ENCODE measurements at regions of chr21 and their contacts with region 1.

Region 1: GRCh38 chr21:46228345-46229051 is at the start of gene LSS:
- DNase-seq: peak; percentile 99
- ATAC-seq: peak; percentile 98
- H3K4me3 Mint-ChIP-seq: peak within 1 kb of the TSS; percentile 98
- H3K27ac Mint-ChIP-seq: peak within 1 kb of the TSS; percentile 99
- H3K4me1 Mint-ChIP-seq: peaks cover 55% of the 10 kb centered on the region
- H3K27me3 Mint-ChIP-seq: no peaks in the 10 kb centered on the region
- total RNA-seq, gene LSS: 72.1 to 76.1 TPM

Region 2: GRCh38 chr21:46253610-46254124 is 25.2 kb after region 1 on chr21:
- CTCF ChIA-PET with region 1: interaction called, 10 read pairs
- POLR2A ChIA-PET with region 1: no interaction called
- DNase-seq: peak; percentile 80
- ATAC-seq: peak; percentile 89
- H3K4me3 Mint-ChIP-seq: peak overlapping the region; percentile 56
- H3K27ac Mint-ChIP-seq: peak overlapping the region; percentile 94
- H3K4me1 Mint-ChIP-seq: peaks cover 42% of the 10 kb centered on the region
- H3K27me3 Mint-ChIP-seq: no peaks in the 10 kb centered on the region

Measured in activated CD8-positive, alpha-beta T cell treated with anti-CD3 and anti-CD28 coated beads, Interleukin-2, amount 10 ng/mL, durations not matched to agents 7 days and 5 days (primary cell).